AG04450 (cell line): ENCODE measurements at regions of chr1 and their contacts with region 1.

Region 1: DNA sequence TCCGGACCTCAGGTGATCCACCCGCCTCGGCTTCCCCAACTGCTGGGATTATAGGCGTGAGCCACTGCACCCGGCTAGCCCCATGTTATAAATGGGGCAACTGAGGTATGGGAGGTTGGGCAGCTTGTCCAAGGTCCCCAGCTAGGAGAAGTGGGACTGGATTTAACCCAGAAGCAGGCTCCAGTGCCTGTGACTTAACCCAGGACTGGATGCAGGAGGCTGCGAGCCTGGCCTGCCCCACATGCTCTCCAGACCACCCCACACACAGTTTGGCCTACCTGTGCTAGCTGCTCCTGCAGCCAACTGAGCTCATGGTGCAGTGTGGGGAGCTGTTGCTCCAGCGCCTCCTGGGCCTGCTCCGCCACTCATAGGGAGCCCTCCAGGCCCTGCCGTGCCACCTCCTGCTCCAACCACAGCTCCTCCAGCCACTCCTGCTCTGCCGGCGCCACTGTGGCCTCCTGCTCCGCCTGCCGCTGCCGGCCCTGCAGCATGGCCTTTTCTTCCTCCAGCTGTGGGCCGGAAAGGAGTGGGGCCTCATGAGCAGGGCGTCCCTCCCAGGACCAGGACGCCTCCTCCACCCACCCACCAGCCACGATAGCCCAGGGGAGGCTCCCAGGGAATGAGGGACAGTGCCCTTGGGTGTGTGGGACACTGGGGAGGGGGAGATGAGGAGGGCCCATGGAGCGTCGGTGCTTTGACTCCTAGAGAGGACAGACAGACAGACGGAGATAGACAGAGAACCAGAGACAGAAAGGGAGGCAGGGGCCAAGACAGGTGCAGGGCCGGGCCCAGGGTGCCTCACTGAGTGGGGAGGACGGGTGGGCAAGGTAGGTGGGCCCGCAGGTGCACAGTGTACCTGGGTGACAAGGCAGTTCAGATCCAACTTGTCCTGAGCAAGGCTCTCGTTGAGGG is 12.4 kb upstream of the NBPF1 start:
- DNase-seq: no peak
- H3K4me3 ChIP-seq: no peak overlapping the region
- H3K27ac ChIP-seq: no peak overlapping the region
- H3K27me3 ChIP-seq: no peaks in the 10 kb centered on the region
- CTCF ChIP-seq: no peak

Region 2: GRCh38 chr1:16607433-16607851 is 18.3 kb before region 1 on chr1:
- CTCF ChIA-PET with region 1: interaction called, 75 read pairs
- POLR2A ChIA-PET with region 1: interaction called, 6 read pairs
- DNase-seq: no peak
- H3K4me3 ChIP-seq: no peak overlapping the region
- H3K27ac ChIP-seq: no peak overlapping the region
- H3K27me3 ChIP-seq: no peaks in the 10 kb centered on the region
- CTCF ChIP-seq: no peak

Region 3: GRCh38 chr1:16613185-16614147 is 12.3 kb before region 1 on chr1 and contains the start of gene NBPF1:
- CTCF ChIA-PET with region 1: interaction called, 75 read pairs
- POLR2A ChIA-PET with region 1: interaction called, 6 read pairs
- DNase-seq: peak; percentile 82
- H3K4me3 ChIP-seq: peak within 1 kb of the TSS; percentile 80
- H3K27ac ChIP-seq: peak within 1 kb of the TSS; percentile 42
- H3K27me3 ChIP-seq: no peaks in the 10 kb centered on the region
- CTCF ChIP-seq: no peak
- polyA plus RNA-seq, gene NBPF1: 34.7 and 36.6 TPM in 2 replicates